ENCODE measurements at regions of chr7 and their contacts with region 1.

Region 1: GRCh38 chr7:77935652-77936348 is 137.2 kb downstream of the PHTF2 start:
- DNase-seq: no peak
- H3K4me3 ChIP-seq: no peak overlapping the region
- H3K27ac ChIP-seq: no peak overlapping the region
- H3K4me1 ChIP-seq: no peaks in the 10 kb centered on the region
- H3K27me3 ChIP-seq: no peaks in the 10 kb centered on the region
- CTCF ChIP-seq: peak; percentile 26

Region 2: DNA sequence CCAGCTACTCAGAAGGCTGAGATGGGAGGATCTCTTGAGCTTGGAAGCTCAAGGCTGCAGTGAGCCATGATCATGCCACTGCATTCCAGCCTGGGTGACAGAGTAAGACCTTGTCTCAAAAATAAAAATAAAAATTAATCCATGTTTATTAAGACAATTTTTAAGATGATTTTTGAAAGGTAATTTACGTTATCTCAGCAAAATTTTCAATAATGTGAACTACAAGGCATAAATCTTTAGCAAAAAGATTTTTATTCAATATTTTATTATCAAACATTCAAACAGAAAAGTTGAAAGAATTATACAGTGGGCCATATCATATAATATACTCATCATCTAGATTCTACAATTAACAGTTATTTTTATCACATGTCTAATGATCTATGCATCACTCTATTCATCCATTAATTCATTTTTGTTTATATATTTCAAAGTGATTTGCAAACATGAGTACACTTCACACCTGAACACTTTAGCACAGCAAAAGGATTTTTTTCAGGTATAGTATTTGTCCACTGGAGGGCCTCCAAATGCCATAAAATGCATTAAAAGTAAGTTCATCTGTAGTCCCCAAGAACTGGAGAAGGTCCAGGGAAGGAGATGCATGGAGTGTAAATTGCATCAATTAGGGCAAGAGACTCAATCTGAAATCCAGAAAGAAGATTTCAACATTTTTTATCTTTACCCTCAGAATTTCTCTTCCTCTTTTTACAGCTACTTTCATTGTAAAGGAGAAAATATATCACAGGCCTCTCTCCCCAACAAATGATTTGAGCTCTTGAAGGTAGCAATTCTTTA is 278.2 kb before region 1 on chr7:
- intact Hi-C with region 1: loop called (anchors 10 kb)
- DNase-seq: peak; percentile 52
- H3K4me3 ChIP-seq: no peak overlapping the region
- H3K27ac ChIP-seq: no peak overlapping the region
- H3K4me1 ChIP-seq: no peaks in the 10 kb centered on the region
- H3K27me3 ChIP-seq: no peaks in the 10 kb centered on the region
- CTCF ChIP-seq: peak; percentile 55